CD8-positive, alpha-beta memory T cell (primary cell): ENCODE measurements at regions of chr2 and their contacts with region 1.

Region 1: DNA sequence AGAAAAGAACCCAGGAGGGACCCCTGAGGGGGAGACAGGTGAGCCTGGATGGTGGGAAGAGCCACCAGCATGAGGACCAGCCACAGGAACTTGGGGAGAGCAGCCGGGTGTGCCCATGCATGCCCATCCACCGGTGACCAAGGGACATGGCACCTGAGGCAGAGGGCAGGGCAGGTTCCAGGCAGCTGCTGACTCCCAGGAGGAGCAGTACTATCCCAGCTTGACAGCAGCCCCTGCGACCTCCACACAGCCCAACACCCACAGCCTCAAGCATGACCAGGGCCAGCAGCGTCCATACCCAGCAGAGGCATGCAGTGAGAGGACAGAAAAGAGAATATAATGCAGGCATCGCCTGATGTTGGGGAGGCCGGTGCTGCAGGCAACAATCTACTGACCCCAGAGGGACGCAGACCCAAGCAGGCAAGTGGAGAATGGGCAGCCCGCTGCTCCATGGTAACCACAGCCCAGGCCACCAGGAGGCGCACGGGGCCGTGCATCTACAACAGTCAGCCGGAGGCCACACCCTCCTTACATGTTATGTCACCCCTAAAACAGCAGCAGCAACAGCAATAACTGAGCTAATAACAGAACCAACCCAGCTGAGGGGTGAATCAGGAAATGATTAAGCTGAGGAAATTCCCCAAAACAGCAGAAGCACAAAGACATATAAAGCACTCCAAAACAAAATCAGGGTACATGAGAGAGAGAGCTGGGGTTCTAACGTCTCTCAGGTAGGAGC is 44.1 kb downstream of the ANKMY1 start:
- DNase-seq: peak; percentile 72 to 89 (median 77)
- H3K4me3 ChIP-seq: no peak overlapping the region
- H3K4me3 Mint-ChIP-seq: peak overlapping the region in 3 of 7 donors; percentile 2 to 44 (median 43)
- H3K27ac ChIP-seq: no peak overlapping the region
- H3K27ac Mint-ChIP-seq: peak overlapping the region; percentile 0 to 93 (median 86)
- H3K4me1 ChIP-seq: peaks cover 11% of the 10 kb centered on the region
- H3K4me1 Mint-ChIP-seq: peaks cover 10 to 14% (median 12%) of the 10 kb centered on the region in 3 donors
- H3K27me3 ChIP-seq: no peaks in the 10 kb centered on the region
- H3K27me3 Mint-ChIP-seq: peaks cover 0 to 2% of the 10 kb centered on the region in 2 donors

Region 2: GRCh38 chr2:240183006-240183874 is 330.5 kb before region 1 on chr2:
- CTCF ChIA-PET with region 1: no interaction called
- POLR2A ChIA-PET with region 1: no interaction called
- DNase-seq: no peak
- H3K4me3 ChIP-seq: no peak overlapping the region
- H3K4me3 Mint-ChIP-seq: no peak overlapping the region
- H3K27ac ChIP-seq: no peak overlapping the region
- H3K27ac Mint-ChIP-seq: no peak overlapping the region
- H3K4me1 ChIP-seq: no peaks in the 10 kb centered on the region
- H3K4me1 Mint-ChIP-seq: no peaks in the 10 kb centered on the region
- H3K27me3 ChIP-seq: peaks cover 3% of the 10 kb centered on the region
- H3K27me3 Mint-ChIP-seq: peaks cover 17 to 49% of the 10 kb centered on the region in 2 donors

Region 3: GRCh38 chr2:240554767-240555493 is 41.2 kb after region 1 on chr2:
- CTCF ChIA-PET with region 1: interaction called, 20 read pairs
- POLR2A ChIA-PET with region 1: no interaction called
- DNase-seq: no peak
- H3K4me3 ChIP-seq: no peak overlapping the region
- H3K4me3 Mint-ChIP-seq: peak overlapping the region in 1 of 7 donors; percentile 52
- H3K27ac ChIP-seq: no peak overlapping the region
- H3K27ac Mint-ChIP-seq: peak overlapping the region in 1 of 8 donors; percentile 24
- H3K4me1 ChIP-seq: peaks cover 28% of the 10 kb centered on the region
- H3K4me1 Mint-ChIP-seq: peaks cover 32 to 54% (median 38%) of the 10 kb centered on the region in 3 donors
- H3K27me3 ChIP-seq: no peaks in the 10 kb centered on the region
- H3K27me3 Mint-ChIP-seq: no peaks in the 10 kb centered on the region

Region 4: DNA sequence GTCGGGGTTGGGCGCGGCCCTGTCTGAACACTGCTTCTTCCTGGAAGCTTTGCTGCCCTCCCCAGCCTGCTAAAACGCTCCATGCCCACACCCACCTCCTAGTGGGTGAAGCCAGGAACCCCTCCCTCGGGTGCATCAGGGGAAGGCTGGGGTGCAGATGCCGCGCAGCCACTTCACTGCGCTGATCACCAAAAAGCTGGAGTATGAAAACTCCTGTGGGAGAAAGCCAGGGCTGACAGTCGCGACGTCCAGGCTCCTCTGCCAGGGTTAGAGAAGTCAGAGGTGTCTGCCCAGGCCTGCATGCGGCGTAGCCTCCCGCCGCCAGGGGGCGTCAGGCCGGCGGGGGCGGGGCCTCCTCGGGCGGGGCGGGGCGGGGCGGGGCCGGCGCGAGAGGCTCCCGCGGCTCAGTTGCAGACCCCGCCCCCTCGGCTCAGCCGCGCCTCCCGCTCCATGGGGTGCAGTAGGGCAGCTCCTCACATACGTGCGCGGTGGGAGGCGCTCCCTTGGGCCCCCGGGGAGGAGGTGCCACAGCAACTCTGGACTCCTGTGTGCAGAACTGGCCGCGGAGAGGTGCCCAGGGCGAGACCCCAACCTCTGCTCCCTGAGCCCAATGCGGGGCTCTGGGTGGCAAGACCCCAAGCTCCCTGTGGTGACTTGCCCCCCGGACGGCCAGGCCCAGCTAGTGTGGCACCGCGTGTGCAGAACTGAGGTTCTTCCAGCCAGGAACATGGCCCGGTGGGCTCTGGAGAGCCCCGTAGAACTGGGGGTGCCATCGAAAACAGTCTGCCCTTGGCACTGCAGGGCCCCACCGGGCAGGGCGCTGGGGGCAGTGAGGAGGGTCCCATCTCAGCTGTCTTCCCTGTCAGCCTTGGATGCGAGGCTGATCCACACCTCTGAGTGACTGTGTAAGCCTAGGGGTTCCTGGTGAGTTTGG is 52.8 kb after region 1 on chr2:
- CTCF ChIA-PET with region 1: interaction called, 39 read pairs
- POLR2A ChIA-PET with region 1: interaction called, 7 read pairs
- DNase-seq: peak; percentile 91 to 97 (median 95)
- H3K4me3 ChIP-seq: peak overlapping the region; percentile 96
- H3K4me3 Mint-ChIP-seq: peak overlapping the region; percentile 92 to 98 (median 96)
- H3K27ac ChIP-seq: peak overlapping the region; percentile 91
- H3K27ac Mint-ChIP-seq: peak overlapping the region; percentile 93 to 99 (median 98)
- H3K4me1 ChIP-seq: peaks cover 84% of the 10 kb centered on the region
- H3K4me1 Mint-ChIP-seq: peaks cover 66 to 87% (median 74%) of the 10 kb centered on the region in 3 donors
- H3K27me3 ChIP-seq: no peaks in the 10 kb centered on the region
- H3K27me3 Mint-ChIP-seq: no peaks in the 10 kb centered on the region

Region 5: GRCh38 chr2:240586198-240586918 is 72.6 kb after region 1 on chr2 and contains the start of gene CAPN10:
- CTCF ChIA-PET with region 1: interaction called, 37 read pairs
- POLR2A ChIA-PET with region 1: interaction called, 8 read pairs
- DNase-seq: peak; percentile 95 to 97 (median 96)
- H3K4me3 ChIP-seq: peak within 1 kb of the TSS; percentile 97
- H3K4me3 Mint-ChIP-seq: peak within 1 kb of the TSS; percentile 94 to 98 (median 95)
- H3K27ac ChIP-seq: peak within 1 kb of the TSS; percentile 80
- H3K27ac Mint-ChIP-seq: peak within 1 kb of the TSS; percentile 92 to 99 (median 98)
- H3K4me1 ChIP-seq: peaks cover 35% of the 10 kb centered on the region
- H3K4me1 Mint-ChIP-seq: peaks cover 47 to 73% (median 55%) of the 10 kb centered on the region in 3 donors
- H3K27me3 ChIP-seq: no peaks in the 10 kb centered on the region
- H3K27me3 Mint-ChIP-seq: peaks cover 0 to 2% of the 10 kb centered on the region in 2 donors
- total RNA-seq, gene CAPN10: 36.1 to 40.5 TPM